Gastrocnemius medialis (tissue), 4 donors: ENCODE measurements at regions of chr2 and their contacts with region 1.

Region 1: GRCh38 chr2:231706731-231707624 is 1.3 kb upstream of the PTMA start:
- DNase-seq: peak; percentile 99
- ATAC-seq: peak; percentile 54 to 58
- H3K4me3 ChIP-seq: peak overlapping the region; percentile 86 to 96 (median 90)
- H3K27ac ChIP-seq: peak overlapping the region; percentile 94 to 100 (median 96)
- H3K4me1 ChIP-seq: peaks cover 22% of the 10 kb centered on the region in 2 donors
- H3K27me3 ChIP-seq: no peaks in the 10 kb centered on the region
- CTCF ChIP-seq: peak; percentile 22 to 80 (median 73)
- POLR2A ChIP-seq: peak; percentile 81 to 85

Region 2: DNA sequence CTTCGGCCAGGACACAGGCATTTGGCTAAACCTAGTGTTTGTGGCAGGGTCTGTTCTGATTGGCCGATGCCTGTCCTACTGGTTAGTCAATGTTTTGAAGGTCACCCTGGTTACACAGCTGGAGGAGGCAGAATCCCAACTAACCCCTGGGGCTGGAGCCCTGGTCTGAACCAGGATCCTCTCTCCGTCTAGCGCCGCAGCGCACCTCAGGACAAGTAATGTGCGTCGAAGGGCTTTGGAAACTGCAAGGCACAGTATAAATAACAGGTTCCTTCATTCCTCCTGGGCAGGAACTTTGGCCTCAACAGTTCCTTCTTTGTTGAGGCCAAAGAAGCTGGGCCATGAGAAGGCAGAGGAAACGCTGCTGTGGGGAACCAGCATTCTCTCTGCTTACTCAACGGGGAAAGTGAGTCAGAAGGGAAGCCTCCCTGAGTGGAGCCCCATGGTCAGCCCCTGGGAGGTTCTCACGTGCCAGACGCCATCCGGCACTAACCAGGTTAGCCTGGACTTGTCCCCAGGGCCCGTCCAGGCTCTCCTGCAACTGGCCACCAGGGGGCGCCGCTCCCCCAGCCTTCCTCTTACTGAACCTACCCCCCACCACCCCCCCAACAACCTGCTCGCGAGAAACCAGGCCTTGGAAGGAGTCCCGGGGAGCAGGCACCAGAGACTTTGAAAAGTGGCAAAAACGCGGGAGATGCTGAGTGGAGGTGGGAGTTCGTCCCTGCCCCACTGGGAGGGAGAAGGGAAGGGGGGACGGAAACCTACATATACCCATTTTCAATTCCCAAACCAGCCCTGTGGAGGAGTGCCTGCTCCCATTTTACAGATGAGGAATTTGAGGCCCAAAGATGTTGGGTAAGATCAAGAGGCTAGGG is 94.6 kb before region 1 on chr2:
- in situ Hi-C with region 1: loop called in 2 of 4 experiments (anchors 5 to 10 kb)
- intact Hi-C with region 1: loop called (anchors 1 kb)
- DNase-seq: peak; percentile 79 to 92
- ATAC-seq: peak; percentile 68 to 79
- H3K4me3 ChIP-seq: peak overlapping the region in 2 of 4 donors; percentile 16 to 65
- H3K27ac ChIP-seq: peak overlapping the region; percentile 85 to 95 (median 89)
- H3K4me1 ChIP-seq: peaks cover 32 to 38% of the 10 kb centered on the region in 2 donors
- H3K27me3 ChIP-seq: no peaks in the 10 kb centered on the region
- CTCF ChIP-seq: peak; percentile 97 to 99 (median 98)
- POLR2A ChIP-seq: peak in 1 of 2 donors; percentile 13

Region 3: DNA sequence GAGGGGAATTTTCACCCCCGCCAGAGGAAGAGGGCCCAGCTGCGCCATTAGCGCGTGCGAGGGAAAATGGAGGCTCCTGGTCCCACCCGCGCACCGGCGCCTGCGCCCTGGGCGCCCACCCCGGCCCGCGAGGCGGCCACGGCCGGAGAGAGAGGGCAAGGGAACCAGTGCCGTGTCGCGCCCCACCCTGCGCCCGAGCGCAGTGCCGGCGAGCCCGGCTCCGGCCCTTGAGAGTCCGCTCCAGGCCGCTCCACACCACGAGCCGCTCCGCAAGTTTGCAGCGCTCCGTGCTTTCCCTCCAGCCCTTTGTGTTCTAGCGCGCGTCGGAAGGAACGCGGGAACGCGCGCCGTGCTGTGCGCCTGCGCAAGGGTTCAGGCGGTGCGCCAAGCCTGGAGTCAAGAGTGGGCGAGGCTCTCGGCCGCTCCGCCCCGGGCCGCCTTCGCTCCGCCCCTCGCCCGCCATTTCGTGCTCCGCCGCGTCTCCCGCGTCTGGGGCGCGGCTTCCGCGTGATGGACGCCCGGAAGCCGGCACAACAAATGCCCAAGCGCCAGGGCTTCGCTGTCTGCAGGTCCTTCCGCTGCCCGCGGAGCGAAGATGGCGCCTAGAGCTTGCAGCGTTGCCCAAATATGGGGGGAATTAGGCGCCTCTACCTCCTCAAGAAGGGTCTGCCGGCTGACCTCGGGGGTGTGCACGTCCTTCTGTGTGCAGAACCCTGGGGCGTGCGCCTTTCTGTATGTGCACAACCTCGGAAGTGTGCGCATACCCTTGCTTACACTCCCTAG is 44.8 kb before region 1 on chr2:
- in situ Hi-C with region 1: no loop called
- intact Hi-C with region 1: loop called (anchors 1 kb)
- DNase-seq: peak; percentile 90 to 94
- ATAC-seq: peak; percentile 70 to 74
- H3K4me3 ChIP-seq: peak overlapping the region; percentile 56 to 81 (median 66)
- H3K27ac ChIP-seq: peak overlapping the region; percentile 86 to 100 (median 98)
- H3K4me1 ChIP-seq: peaks cover 15 to 22% of the 10 kb centered on the region in 2 donors
- H3K27me3 ChIP-seq: no peaks in the 10 kb centered on the region
- CTCF ChIP-seq: peak in 2 of 5 experiments; percentile 42 to 45
- POLR2A ChIP-seq: peak; percentile 48 to 66

Region 4: GRCh38 chr2:231680992-231681853 is 25.8 kb before region 1 on chr2:
- in situ Hi-C with region 1: loop called in 1 of 4 experiments (anchors 5 kb)
- intact Hi-C with region 1: loop called (anchors 1 kb)
- DNase-seq: peak; percentile 81 to 88
- ATAC-seq: peak; percentile 81 to 85
- H3K4me3 ChIP-seq: peak overlapping the region; percentile 52 to 74 (median 64)
- H3K27ac ChIP-seq: peak overlapping the region; percentile 87 to 95 (median 90)
- H3K4me1 ChIP-seq: peaks cover 10 to 14% of the 10 kb centered on the region in 2 donors
- H3K27me3 ChIP-seq: no peaks in the 10 kb centered on the region
- CTCF ChIP-seq: peak in 2 of 5 experiments; percentile 13 to 20
- POLR2A ChIP-seq: peak; percentile 65 to 67

Region 5: GRCh38 chr2:233422050-233422639 is 1715.2 kb after region 1 on chr2:
- in situ Hi-C with region 1: no loop called
- intact Hi-C with region 1: loop called (anchors 10 kb)
- DNase-seq: peak; percentile 92 to 96
- ATAC-seq: peak; percentile 47 to 51
- H3K4me3 ChIP-seq: peak overlapping the region; percentile 54 to 66 (median 62)
- H3K27ac ChIP-seq: peak overlapping the region; percentile 92 to 97 (median 96)
- H3K4me1 ChIP-seq: peaks cover 81 to 84% of the 10 kb centered on the region in 2 donors
- H3K27me3 ChIP-seq: no peaks in the 10 kb centered on the region
- CTCF ChIP-seq: no peak
- POLR2A ChIP-seq: peak; percentile 66 to 70